Endothelial cell of umbilical vein (primary cell): ENCODE measurements at regions of chr14 and their contacts with region 1.

Region 1: GRCh38 chr14:99755629-99756603 is 37.3 kb upstream of the EML1 start:
- DNase-seq: peak; percentile 93
- H3K4me3 ChIP-seq: no peak overlapping the region
- H3K27ac ChIP-seq: peak overlapping the region; percentile 83
- H3K4me1 ChIP-seq: peaks cover 81% of the 10 kb centered on the region
- H3K27me3 ChIP-seq: no peaks in the 10 kb centered on the region
- CTCF ChIP-seq: no peak
- POLR2A ChIP-seq: no peak

Region 2: GRCh38 chr14:99537399-99537798 is 218.5 kb before region 1 on chr14:
- CTCF ChIA-PET with region 1: no interaction called
- POLR2A ChIA-PET with region 1: no interaction called
- dilution Hi-C with region 1: no loop called
- intact Hi-C with region 1: loop called (anchors 10 kb)
- DNase-seq: peak; percentile 27
- H3K4me3 ChIP-seq: no peak overlapping the region
- H3K27ac ChIP-seq: no peak overlapping the region
- H3K4me1 ChIP-seq: peaks cover 4% of the 10 kb centered on the region
- H3K27me3 ChIP-seq: no peaks in the 10 kb centered on the region
- CTCF ChIP-seq: no peak
- POLR2A ChIP-seq: no peak

Region 3: GRCh38 chr14:99604283-99604765 is 151.6 kb before region 1 on chr14:
- CTCF ChIA-PET with region 1: no interaction called
- POLR2A ChIA-PET with region 1: no interaction called
- dilution Hi-C with region 1: no loop called
- intact Hi-C with region 1: loop called (anchors 5 kb)
- DNase-seq: peak; percentile 92
- H3K4me3 ChIP-seq: peak overlapping the region; percentile 45 to 81 (median 78)
- H3K27ac ChIP-seq: peak overlapping the region; percentile 60
- H3K4me1 ChIP-seq: peaks cover 20% of the 10 kb centered on the region
- H3K27me3 ChIP-seq: peaks cover 0 to 5% of the 10 kb centered on the region in 2 experiments
- CTCF ChIP-seq: no peak
- POLR2A ChIP-seq: peak; percentile 48

Region 4: GRCh38 chr14:99737451-99737951 is 18.4 kb before region 1 on chr14:
- CTCF ChIA-PET with region 1: interaction called, 13 read pairs
- POLR2A ChIA-PET with region 1: interaction called, 3 read pairs
- dilution Hi-C with region 1: no loop called
- intact Hi-C with region 1: loop called (anchors 1 kb)
- DNase-seq: peak; percentile 79
- H3K4me3 ChIP-seq: peak overlapping the region; percentile 39 to 57 (median 55)
- H3K27ac ChIP-seq: peak overlapping the region; percentile 81
- H3K4me1 ChIP-seq: peaks cover 39% of the 10 kb centered on the region
- H3K27me3 ChIP-seq: no peaks in the 10 kb centered on the region
- CTCF ChIP-seq: no peak
- POLR2A ChIP-seq: peak; percentile 53

Region 5: DNA sequence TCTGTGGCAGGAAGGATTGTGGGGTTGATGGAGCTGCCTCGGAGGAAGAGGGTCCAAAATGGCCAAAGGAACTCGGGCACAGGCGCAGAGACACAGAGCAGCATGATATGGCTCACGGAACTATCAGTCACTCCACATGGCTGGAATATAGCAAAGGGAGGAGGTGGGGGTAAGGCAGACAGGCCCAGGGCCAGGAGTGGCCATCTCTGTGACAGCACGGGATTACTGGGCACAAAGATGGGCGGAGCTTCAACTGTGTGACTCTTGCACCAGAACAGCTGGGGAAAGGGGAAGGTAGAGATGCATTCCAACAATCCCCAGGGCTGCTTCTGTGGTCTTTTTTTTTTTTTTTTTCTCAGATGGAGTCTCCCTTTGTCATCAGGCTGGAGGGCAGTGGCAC is 12.5 kb after region 1 on chr14:
- CTCF ChIA-PET with region 1: interaction called, 7 read pairs
- POLR2A ChIA-PET with region 1: no interaction called
- dilution Hi-C with region 1: no loop called
- intact Hi-C with region 1: loop called (anchors 1 kb)
- DNase-seq: no peak
- H3K4me3 ChIP-seq: no peak overlapping the region
- H3K27ac ChIP-seq: no peak overlapping the region
- H3K4me1 ChIP-seq: no peaks in the 10 kb centered on the region
- H3K27me3 ChIP-seq: no peaks in the 10 kb centered on the region
- CTCF ChIP-seq: no peak
- POLR2A ChIP-seq: no peak

Region 6: DNA sequence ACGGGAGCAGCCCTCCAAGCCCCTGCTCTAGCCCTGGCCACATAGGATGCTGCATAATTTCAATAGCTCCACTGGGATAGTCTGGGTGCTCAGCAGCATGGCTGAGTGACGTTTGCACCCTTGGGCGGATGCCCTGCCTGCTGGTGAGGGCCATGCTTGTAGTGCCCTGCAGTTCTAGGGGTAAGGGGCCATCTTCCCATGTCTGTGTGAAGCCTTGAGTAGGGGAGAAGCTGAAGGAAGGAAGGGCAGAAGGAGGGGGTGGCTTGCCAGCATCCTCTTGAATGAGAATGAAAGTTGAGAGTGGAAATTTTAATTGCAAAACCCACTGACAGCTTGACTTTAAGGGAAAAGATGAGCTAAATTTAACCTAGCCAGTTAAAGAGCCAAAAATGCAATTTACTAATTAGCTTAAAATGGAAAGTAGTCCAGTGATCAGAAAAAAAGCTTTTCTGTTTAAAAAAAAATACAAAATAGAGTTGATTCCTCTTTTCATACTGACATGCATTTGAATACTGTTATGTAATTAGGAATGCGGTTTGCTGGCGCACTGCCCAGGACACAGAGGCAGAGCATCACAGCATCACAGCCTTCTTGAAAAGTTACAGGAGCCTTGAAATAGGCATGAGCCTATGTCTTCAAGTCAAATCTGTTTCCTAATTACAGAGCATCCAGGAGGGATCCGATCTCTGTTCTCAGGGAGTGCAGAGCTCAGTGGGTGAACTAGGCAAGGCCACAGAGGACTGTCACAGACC is 18.8 kb after region 1 on chr14:
- CTCF ChIA-PET with region 1: interaction called, 11 read pairs
- POLR2A ChIA-PET with region 1: no interaction called
- dilution Hi-C with region 1: no loop called
- intact Hi-C with region 1: no loop called
- DNase-seq: no peak
- H3K4me3 ChIP-seq: no peak overlapping the region
- H3K27ac ChIP-seq: no peak overlapping the region
- H3K4me1 ChIP-seq: no peaks in the 10 kb centered on the region
- H3K27me3 ChIP-seq: no peaks in the 10 kb centered on the region
- CTCF ChIP-seq: no peak
- POLR2A ChIP-seq: no peak

Region 7: GRCh38 chr14:99793213-99794150 is 37.6 kb after region 1 on chr14 and contains the start of gene EML1:
- CTCF ChIA-PET with region 1: interaction called, 26 read pairs
- POLR2A ChIA-PET with region 1: no interaction called
- dilution Hi-C with region 1: no loop called
- intact Hi-C with region 1: loop called (anchors 2 kb)
- DNase-seq: peak; percentile 64
- H3K4me3 ChIP-seq: peak within 1 kb of the TSS; percentile 35 to 91 (median 65)
- H3K27ac ChIP-seq: peak within 1 kb of the TSS; percentile 15
- H3K4me1 ChIP-seq: peaks cover 20% of the 10 kb centered on the region
- H3K27me3 ChIP-seq: no peaks in the 10 kb centered on the region
- CTCF ChIP-seq: no peak
- POLR2A ChIP-seq: peak; percentile 56
- total RNA-seq, gene EML1: 33.0 and 47.8 TPM in 2 replicates